Activated CD4-positive, alpha-beta T cell treated with anti-CD3 and anti-CD28 coated beads for 36 hours (primary cell): ENCODE measurements at regions of chr15 and their contacts with region 1.

Region 1: GRCh38 chr15:50424066-50424890 is at the start of gene USP8:
- DNase-seq: peak; percentile 97
- ATAC-seq: peak; percentile 98
- H3K4me3 Mint-ChIP-seq: peak within 1 kb of the TSS; percentile 88
- H3K27ac Mint-ChIP-seq: peak within 1 kb of the TSS; percentile 92
- H3K4me1 Mint-ChIP-seq: peaks cover 32% of the 10 kb centered on the region
- H3K27me3 Mint-ChIP-seq: no peaks in the 10 kb centered on the region
- total RNA-seq, gene USP8: 39.8 to 45.3 TPM

Region 2: DNA sequence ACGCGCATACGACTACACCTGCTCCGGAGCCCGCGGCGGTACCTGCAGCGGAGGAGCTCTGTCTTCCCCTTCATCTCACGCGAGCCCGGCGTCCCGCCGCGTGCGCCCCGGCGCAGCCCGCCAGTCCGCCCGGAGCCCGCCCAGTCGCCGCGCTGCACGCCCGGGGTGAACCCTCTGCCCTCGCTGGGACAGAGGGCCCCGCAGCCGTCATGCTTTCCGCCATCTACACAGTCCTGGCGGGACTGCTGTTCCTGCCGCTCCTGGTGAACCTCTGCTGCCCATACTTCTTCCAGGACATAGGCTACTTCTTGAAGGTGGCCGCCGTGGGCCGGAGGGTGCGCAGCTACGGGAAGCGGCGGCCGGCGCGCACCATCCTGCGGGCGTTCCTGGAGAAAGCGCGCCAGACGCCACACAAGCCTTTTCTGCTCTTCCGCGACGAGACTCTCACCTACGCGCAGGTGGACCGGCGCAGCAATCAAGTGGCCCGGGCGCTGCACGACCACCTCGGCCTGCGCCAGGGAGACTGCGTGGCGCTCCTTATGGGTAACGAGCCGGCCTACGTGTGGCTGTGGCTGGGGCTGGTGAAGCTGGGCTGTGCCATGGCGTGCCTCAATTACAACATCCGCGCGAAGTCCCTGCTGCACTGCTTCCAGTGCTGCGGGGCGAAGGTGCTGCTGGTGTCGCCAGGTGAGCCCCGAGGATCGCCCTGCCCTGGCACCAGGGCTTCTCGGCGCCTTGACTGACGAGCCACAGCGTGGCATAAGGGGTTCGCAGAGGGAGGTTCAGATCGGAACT is 241.9 kb before region 1 on chr15:
- CTCF ChIA-PET with region 1: no interaction called
- POLR2A ChIA-PET with region 1: interaction called, 4 read pairs
- intact Hi-C with region 1: loop called in 1 of 2 experiments (anchors 5 kb)
- DNase-seq: peak; percentile 73
- ATAC-seq: peak; percentile 68
- H3K4me3 Mint-ChIP-seq: peak overlapping the region; percentile 85
- H3K27ac Mint-ChIP-seq: peak overlapping the region; percentile 88
- H3K4me1 Mint-ChIP-seq: peaks cover 21% of the 10 kb centered on the region
- H3K27me3 Mint-ChIP-seq: peaks cover 27% of the 10 kb centered on the region

Region 3: GRCh38 chr15:50377867-50378751 is 46.2 kb before region 1 on chr15:
- CTCF ChIA-PET with region 1: interaction called, 5 read pairs
- POLR2A ChIA-PET with region 1: interaction called, 3 read pairs
- intact Hi-C with region 1: loop called (anchors 1 kb)
- DNase-seq: no peak
- ATAC-seq: peak; percentile 96
- H3K4me3 Mint-ChIP-seq: no peak overlapping the region
- H3K27ac Mint-ChIP-seq: peak overlapping the region; percentile 77
- H3K4me1 Mint-ChIP-seq: peaks cover 19% of the 10 kb centered on the region
- H3K27me3 Mint-ChIP-seq: no peaks in the 10 kb centered on the region

Region 4: DNA sequence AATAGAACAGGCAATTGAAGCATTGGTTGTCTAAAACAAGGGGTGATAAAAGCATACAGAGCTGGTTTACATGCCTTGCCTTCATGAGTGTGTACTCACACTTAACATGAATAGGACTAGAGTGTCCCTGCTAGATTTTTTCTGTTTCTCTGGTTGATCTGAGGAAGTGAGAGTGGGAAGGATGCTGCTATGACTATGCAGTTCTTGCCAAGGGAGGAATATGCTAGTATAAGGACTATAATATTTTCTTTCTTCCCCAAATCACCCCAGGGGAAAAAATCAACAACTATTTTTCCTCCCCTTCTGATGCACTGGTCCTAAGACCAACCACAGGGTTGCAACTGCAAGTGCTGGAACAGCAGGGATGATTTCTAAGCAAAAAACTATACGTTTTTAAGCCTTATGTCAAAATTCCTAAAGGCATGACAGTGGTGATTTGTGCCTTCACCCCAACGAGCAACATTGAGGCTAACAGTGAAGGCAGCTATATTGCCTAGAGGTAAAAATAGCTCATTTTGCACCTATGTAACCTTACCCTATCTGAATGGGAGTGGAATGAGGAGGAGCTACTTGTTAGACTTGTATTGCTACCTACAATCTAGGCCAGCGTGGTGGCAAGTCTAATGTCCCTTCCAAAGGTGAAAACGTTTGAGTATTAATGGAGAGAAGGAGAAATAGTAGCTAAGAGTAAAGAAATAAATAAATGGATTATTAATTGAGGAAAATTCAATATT is 33.6 kb before region 1 on chr15:
- CTCF ChIA-PET with region 1: no interaction called
- POLR2A ChIA-PET with region 1: interaction called, 12 read pairs
- intact Hi-C with region 1: no loop called
- DNase-seq: no peak
- ATAC-seq: no peak
- H3K4me3 Mint-ChIP-seq: no peak overlapping the region
- H3K27ac Mint-ChIP-seq: no peak overlapping the region
- H3K4me1 Mint-ChIP-seq: no peaks in the 10 kb centered on the region
- H3K27me3 Mint-ChIP-seq: no peaks in the 10 kb centered on the region

Region 5: GRCh38 chr15:50686468-50687301 is 262.4 kb after region 1 on chr15 and contains the start of gene TRPM7:
- CTCF ChIA-PET with region 1: no interaction called
- POLR2A ChIA-PET with region 1: no interaction called
- intact Hi-C with region 1: loop called (anchors 1 to 2 kb)
- DNase-seq: peak; percentile 95
- ATAC-seq: peak; percentile 79
- H3K4me3 Mint-ChIP-seq: peak within 1 kb of the TSS; percentile 99
- H3K27ac Mint-ChIP-seq: peak within 1 kb of the TSS; percentile 97
- H3K4me1 Mint-ChIP-seq: peaks cover 49% of the 10 kb centered on the region
- H3K27me3 Mint-ChIP-seq: no peaks in the 10 kb centered on the region
- total RNA-seq, gene TRPM7: 40.7 to 41.4 TPM